PC-9 (cell line): ENCODE measurements at regions of chr4 and their contacts with region 1.

Region 1: GRCh38 chr4:687048-687970 is 1.6 kb downstream of the SLC49A3 start:
- DNase-seq: peak; percentile 86 to 89
- H3K4me3 ChIP-seq: peak overlapping the region; percentile 28; the same call in 1 of the 2 replicates
- H3K27ac ChIP-seq: peak overlapping the region; percentile 5; the same call in 1 of the 2 replicates
- H3K4me1 ChIP-seq: peaks cover 19% of the 10 kb centered on the region
- H3K27me3 ChIP-seq: no peaks in the 10 kb centered on the region
- CTCF ChIP-seq: no peak

Region 2: DNA sequence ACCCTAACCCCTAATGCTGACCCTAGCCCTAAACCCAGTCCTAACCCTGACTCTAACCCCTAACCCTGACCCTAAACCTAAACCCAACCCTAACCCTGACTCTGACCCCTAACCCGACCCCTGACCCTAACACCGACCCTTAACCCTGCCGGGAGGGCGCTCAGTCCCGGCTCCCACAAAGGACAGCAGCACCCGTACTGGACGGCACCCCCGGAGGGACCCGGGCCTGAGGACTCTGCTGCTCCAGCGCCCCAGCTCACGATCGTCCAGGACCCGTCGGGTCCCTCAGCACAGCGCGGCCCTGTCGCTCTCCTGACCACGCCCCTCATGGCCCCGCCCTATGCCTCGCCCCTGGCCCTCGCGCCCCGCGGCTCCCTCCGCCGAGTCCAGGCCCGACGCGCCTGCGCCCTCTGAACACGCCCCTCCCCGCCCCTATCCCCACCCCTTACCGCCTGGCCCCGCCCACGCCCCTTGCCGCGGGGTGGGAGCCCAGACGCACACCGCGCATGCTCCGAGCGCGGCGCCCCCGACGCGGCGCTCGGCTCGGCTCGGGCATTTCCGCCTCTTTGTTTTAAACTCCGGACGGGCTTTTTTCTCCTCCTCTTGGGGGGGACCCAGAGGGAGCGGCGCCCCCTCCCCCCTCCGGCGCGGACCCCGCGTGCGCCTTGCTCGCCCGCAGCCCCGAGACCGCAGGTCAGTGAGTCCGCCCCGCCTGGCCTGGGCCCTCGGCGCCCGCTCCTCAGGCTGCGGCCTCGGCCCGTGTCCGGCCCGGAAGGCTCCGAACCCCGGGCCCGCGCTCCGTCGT is 18.2 kb after region 1 on chr4 and contains the start of gene PCGF3:
- CTCF ChIA-PET with region 1: no interaction called
- POLR2A ChIA-PET with region 1: interaction called, 4 read pairs
- intact Hi-C with region 1: loop called (anchors 2 kb)
- DNase-seq: peak; percentile 81 to 97
- H3K4me3 ChIP-seq: peak within 1 kb of the TSS; percentile 95
- H3K27ac ChIP-seq: peak within 1 kb of the TSS; percentile 45; the same call in 1 of the 2 replicates
- H3K4me1 ChIP-seq: 0 out of 2 replicates have a peak, but pooled peaks cover 5% of the 10 kb centered on the region
- H3K27me3 ChIP-seq: no peaks in the 10 kb centered on the region
- CTCF ChIP-seq: no peak
- total RNA-seq, gene PCGF3: 60.5 and 60.8 TPM in 2 replicates